ENCODE measurements at regions of chr11 and their contacts with region 1.

Region 1: DNA sequence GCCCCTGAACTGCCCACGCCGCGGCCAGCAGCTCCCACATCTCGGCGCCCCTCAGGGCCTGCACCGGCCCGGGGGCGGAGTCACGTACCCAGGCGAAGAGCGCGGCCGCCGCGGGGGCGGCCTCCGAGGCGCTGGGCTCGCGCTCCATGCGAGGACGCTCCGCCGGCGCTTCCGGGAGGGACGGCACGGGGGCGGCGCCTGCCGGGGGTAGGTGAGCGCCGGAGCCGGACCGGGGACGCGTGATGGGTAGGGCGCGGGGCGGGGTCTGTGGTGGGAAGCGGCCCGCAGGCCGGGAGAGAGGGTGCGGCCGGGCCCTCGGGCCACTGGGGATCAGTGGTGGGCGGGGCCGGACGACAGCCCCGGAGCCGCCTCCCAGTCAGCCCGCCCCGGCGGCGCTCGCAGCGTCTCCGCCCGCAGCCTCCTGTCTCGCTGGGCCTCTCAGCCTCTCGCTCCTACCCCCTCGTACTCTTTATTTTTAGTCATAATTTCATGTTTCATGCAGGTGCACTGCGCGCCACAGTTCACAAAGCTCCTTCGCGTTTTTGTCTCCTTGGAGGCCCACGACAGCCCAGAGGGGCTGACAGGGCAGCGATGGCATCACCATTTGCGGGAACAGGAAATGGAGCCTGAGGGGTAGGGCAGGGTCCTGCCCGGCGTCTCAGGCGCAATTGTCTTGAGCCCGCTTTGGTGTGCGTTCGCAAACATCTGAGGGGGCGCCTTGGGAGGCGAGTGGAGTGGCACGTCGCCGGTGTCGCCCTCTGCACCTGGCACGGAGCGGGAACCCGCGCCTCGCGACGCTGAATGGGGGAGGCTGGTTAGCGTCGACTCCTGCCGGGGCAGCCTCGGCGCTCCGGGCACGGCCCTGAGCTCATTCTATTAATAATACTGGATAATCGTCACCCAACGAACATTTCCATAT is at the start of gene SERGEF:
- DNase-seq: peak; percentile 69 to 92 (median 81)
- H3K4me3 ChIP-seq: peak within 1 kb of the TSS; percentile 55 to 100 (median 89)
- H3K27ac ChIP-seq: peak within 1 kb of the TSS; percentile 3 to 96 (median 88)
- H3K27me3 ChIP-seq: no peaks in the 10 kb centered on the region
- CTCF ChIP-seq: peak in 35 of 56 donors; percentile 3 to 70 (median 33)
- total RNA-seq, gene SERGEF: 58.0 to 174 (median 121) TPM

Region 2: DNA sequence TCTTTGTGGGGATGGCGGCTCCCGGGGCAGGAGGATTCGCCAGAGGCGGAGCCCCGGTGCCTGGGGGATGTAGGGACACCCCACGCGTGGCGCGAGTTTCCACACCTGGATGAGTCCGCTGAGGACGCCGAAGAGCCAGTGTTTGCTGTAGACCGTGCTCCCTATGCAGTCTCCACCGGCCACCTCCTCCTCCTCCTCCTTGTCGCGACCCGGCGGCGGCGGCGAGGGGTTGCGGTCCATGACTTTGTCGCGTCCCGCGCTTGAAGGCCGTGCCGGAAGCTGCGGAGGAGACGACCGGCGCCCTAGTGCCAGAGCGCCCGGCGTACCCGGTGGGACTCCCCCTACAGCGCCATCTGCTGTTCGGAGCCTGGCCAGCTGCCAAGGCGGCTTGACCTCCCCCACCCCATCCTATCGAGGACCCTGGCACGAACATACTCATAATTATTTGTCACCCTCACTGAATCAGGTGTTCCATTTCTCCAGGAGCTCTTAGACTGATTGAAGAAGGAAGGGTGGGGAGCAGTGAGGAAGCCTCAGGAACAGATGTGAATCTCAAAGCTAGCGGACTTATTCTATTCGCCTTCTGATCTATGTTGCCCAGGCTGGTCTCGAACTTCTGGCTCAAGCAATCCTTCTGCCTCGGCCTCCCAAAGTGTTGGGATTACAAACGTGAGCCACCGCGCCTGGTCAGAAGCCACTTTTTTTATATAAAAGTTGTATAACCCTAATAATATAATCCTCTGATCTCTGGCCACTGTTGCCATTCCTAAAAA is 92.9 kb after region 1 on chr11 and contains the start of gene SAAL1:
- intact Hi-C with region 1: loop called (anchors 2 to 5 kb)
- DNase-seq: peak; percentile 75 to 91 (median 84)
- H3K4me3 ChIP-seq: peak within 1 kb of the TSS; percentile 71 to 100 (median 94)
- H3K27ac ChIP-seq: peak within 1 kb of the TSS in 34 of 59 donors; percentile 2 to 88 (median 52)
- H3K27me3 ChIP-seq: no peaks in the 10 kb centered on the region
- CTCF ChIP-seq: peak; percentile 48 to 97 (median 86)
- total RNA-seq, gene SAAL1: 8.6 to 28.1 (median 15.8) TPM

Region 3: GRCh38 chr11:18907391-18907790 is 894.3 kb after region 1 on chr11:
- intact Hi-C with region 1: no loop called
- DNase-seq: peak in 1 of 10 donors; percentile 8
- H3K4me3 ChIP-seq: no peak overlapping the region
- H3K27ac ChIP-seq: no peak overlapping the region
- H3K27me3 ChIP-seq: peaks cover 0 to 4% (median 0%) of the 10 kb centered on the region in 45 donors
- CTCF ChIP-seq: no peak